Endothelial cell of umbilical vein (primary cell): ENCODE measurements at regions of chr15 and their contacts with region 1.

Region 1: DNA sequence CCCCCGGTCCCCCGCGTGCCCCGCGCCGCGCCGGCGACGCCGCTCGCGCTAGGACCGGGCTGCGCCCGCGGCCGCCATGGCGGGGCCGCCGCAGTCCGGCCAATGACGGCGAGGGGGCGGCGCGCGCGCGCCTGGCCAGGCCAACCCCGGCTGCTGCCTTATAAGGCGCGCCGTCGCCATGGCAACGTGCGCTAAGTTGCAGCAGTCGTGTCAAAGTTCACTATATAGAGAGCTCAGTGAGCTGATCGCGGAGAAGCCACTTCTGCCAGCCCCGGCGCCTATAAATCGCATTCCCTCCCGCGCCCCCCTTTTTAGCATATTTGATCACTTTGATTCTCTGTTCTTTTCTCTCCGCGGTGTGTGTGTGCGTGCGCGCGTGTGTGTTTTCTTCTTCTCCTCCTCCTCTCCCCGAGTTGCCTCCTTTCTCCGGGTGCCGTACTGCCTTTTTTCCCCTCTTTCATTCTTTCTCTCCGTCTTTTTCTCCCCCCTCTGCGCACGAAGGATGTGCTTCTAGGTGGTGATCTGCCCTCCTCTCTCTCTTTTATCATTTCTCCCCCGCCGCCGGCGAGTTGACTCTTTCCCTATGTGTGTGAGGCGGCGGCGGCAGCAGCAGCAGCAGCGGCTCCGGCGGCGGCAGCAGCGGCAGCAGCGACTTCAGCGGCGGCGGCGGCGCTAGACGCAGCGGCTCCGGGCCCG is at the start of gene NR2F2:
- DNase-seq: peak; percentile 98
- H3K4me3 ChIP-seq: peak within 1 kb of the TSS; percentile 92 to 99 (median 99)
- H3K27ac ChIP-seq: peak within 1 kb of the TSS; percentile 92
- H3K4me1 ChIP-seq: peaks cover 22% of the 10 kb centered on the region
- H3K27me3 ChIP-seq: no peaks in the 10 kb centered on the region
- CTCF ChIP-seq: no peak
- POLR2A ChIP-seq: peak; percentile 99
- total RNA-seq, gene NR2F2: 153 and 182 TPM in 2 replicates

Region 2: GRCh38 chr15:95025924-95026728 is 1304.5 kb before region 1 on chr15:
- CTCF ChIA-PET with region 1: interaction called, 30 read pairs
- POLR2A ChIA-PET with region 1: interaction called, 7 read pairs
- dilution Hi-C with region 1: no loop called
- intact Hi-C with region 1: loop called (anchors 1 kb)
- DNase-seq: peak; percentile 78
- H3K4me3 ChIP-seq: no peak overlapping the region
- H3K27ac ChIP-seq: no peak overlapping the region
- H3K4me1 ChIP-seq: peaks cover 2% of the 10 kb centered on the region
- H3K27me3 ChIP-seq: no peaks in the 10 kb centered on the region
- CTCF ChIP-seq: peak; percentile 62 to 76
- POLR2A ChIP-seq: no peak

Region 3: DNA sequence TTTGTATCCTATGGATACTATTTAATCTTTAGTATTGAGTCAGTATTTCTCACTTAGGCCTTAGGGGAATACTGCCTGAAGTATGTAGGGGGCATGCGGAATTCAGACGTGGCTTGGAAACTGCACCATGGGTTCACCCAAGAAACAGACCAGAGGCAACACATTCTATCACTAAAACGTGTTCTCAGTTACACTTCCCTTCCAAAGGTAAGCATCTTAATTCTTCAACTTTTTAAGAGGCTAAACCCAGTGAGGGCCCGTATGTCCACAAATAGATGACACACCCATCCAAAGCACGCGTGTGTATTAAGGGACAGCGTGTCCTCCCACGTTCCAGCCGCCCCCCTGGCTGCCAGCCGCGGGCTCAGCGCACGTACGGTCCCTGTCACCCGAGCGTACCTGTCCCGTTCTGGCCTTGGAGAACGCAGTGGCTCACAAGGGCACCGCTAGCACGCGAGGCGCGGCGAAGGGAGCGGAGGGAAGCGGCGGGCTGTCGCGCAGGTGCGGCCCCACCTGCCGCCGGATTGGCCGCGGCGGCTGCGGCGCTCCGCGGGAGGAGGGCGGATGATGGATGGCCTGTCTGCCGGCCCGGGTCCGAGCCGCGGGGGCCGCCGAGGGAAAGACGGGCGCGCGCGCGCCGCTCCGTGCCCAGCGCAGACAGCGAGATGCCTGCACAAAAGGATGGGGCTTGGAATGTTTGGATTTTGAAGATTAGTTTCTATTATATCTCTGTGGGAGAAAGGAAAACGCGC is 1004.0 kb before region 1 on chr15:
- CTCF ChIA-PET with region 1: interaction called, 8 read pairs
- POLR2A ChIA-PET with region 1: interaction called, 12 read pairs
- dilution Hi-C with region 1: loop called (anchors 25 kb)
- intact Hi-C with region 1: loop called (anchors 1 kb)
- DNase-seq: peak; percentile 75
- H3K4me3 ChIP-seq: peak overlapping the region; percentile 64 to 81 (median 65)
- H3K27ac ChIP-seq: peak overlapping the region; percentile 98
- H3K4me1 ChIP-seq: peaks cover 63% of the 10 kb centered on the region
- H3K27me3 ChIP-seq: no peaks in the 10 kb centered on the region
- CTCF ChIP-seq: peak in 1 of 2 donors; percentile 0
- POLR2A ChIP-seq: no peak

Region 4: GRCh38 chr15:95684693-95685115 is 645.9 kb before region 1 on chr15:
- CTCF ChIA-PET with region 1: no interaction called
- POLR2A ChIA-PET with region 1: no interaction called
- dilution Hi-C with region 1: no loop called
- intact Hi-C with region 1: loop called (anchors 1 kb)
- DNase-seq: peak; percentile 97
- H3K4me3 ChIP-seq: no peak overlapping the region
- H3K27ac ChIP-seq: peak overlapping the region; percentile 66
- H3K4me1 ChIP-seq: peaks cover 22% of the 10 kb centered on the region
- H3K27me3 ChIP-seq: no peaks in the 10 kb centered on the region
- CTCF ChIP-seq: no peak
- POLR2A ChIP-seq: peak; percentile 66

Region 5: DNA sequence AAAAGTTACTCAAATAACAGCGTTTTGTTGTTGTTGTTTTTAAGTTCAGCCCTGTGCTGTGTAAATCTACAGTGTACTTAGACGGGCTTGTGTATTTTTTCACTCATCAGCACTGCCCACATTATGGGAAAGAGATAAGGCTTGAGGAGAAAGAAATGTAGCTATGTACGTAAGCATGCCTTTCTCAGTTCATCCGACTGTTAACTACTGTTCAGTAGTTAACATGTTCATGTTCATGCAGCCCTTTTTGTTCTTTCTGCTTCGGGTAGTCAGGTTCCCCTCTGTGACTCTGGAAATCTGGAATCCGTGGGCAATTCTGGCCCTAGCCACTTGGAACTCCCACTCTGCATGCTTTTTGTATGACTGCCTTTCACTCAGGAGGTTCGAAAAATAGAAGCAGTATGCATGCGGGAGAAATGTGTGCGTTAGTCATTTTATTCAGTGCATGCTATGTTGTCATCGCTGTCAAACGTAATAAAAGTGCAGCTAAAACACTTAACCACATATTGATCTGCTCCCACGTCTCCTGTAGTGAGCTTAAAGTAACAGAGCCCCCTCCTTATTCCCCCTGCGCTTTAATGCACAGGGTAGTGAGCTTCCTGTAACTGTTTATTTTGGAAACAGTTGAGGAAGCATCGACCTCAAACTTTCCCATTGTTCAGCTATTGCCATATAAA is 283.2 kb before region 1 on chr15:
- CTCF ChIA-PET with region 1: interaction called, 7 read pairs
- POLR2A ChIA-PET with region 1: no interaction called
- dilution Hi-C with region 1: no loop called
- intact Hi-C with region 1: loop called (anchors 1 kb)
- DNase-seq: peak; percentile 83
- H3K4me3 ChIP-seq: peak overlapping the region in 1 of 3 experiments; percentile 13
- H3K27ac ChIP-seq: no peak overlapping the region
- H3K4me1 ChIP-seq: peaks cover 14% of the 10 kb centered on the region
- H3K27me3 ChIP-seq: peaks cover 0 to 1% of the 10 kb centered on the region in 2 experiments
- CTCF ChIP-seq: no peak
- POLR2A ChIP-seq: no peak

Region 6: DNA sequence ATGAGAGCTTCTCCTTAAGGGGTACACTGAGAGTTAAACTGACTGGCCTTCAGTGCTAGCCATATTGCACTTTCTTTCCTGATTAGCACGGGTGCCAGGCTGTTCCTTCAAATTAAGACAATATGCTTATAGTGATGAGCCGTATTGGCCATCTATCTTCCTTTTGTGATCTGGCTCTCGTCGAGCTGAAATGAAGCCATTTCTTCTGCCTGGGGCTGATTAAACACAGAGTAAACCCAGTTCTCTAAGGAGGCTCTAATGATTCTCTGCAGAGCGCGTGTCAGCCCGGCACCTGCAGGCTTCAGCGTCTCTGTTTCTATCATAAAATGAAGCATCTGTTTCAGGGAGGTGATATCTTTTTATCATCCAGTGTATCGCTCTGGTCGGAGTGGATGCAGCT is 107.6 kb before region 1 on chr15:
- CTCF ChIA-PET with region 1: no interaction called
- POLR2A ChIA-PET with region 1: no interaction called
- dilution Hi-C with region 1: no loop called
- intact Hi-C with region 1: no loop called
- DNase-seq: no peak
- H3K4me3 ChIP-seq: no peak overlapping the region
- H3K27ac ChIP-seq: no peak overlapping the region
- H3K4me1 ChIP-seq: no peaks in the 10 kb centered on the region
- H3K27me3 ChIP-seq: no peaks in the 10 kb centered on the region
- CTCF ChIP-seq: no peak
- POLR2A ChIP-seq: no peak

Region 7: GRCh38 chr15:96893159-96893906 is 562.7 kb after region 1 on chr15:
- CTCF ChIA-PET with region 1: interaction called, 4 read pairs
- POLR2A ChIA-PET with region 1: interaction called, 3 read pairs
- dilution Hi-C with region 1: no loop called
- intact Hi-C with region 1: loop called (anchors 2 kb)
- DNase-seq: peak; percentile 80
- H3K4me3 ChIP-seq: no peak overlapping the region
- H3K27ac ChIP-seq: no peak overlapping the region
- H3K4me1 ChIP-seq: peaks cover 4% of the 10 kb centered on the region
- H3K27me3 ChIP-seq: no peaks in the 10 kb centered on the region
- CTCF ChIP-seq: peak; percentile 62 to 70
- POLR2A ChIP-seq: no peak